ENCODE measurements at regions of chr1 and their contacts with region 1.

Region 1: DNA sequence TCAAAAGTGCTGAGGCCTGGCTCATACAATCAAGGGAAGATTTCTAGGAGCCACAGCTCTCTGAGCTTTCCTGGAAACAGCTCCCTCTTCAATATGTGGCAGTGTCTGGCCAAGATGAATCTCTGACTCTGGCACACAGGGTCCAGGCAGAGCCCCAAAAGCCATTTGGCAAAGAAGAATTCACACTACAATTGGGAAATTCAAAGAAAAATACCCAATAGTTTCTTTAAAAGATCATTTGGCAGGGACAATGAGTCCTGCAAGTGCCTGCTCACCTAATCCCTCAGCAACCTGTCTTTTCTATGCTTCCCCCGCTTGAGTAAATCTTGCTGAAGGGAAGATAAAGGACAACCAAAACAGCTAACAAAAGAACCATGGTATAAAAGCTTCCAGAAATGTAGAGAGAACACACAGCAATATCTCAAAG is 124.6 kb downstream of the TGFBR3 start:
- DNase-seq: peak in 2 of 4 experiments; percentile 32 to 51
- ATAC-seq: no peak; the same call in 2 of the 3 replicates
- H3K4me3 ChIP-seq: no peak overlapping the region
- H3K27ac ChIP-seq: no peak overlapping the region
- H3K4me1 ChIP-seq: peaks cover 9 to 62% of the 10 kb centered on the region in 2 experiments
- H3K27me3 ChIP-seq: no peaks in the 10 kb centered on the region
- CTCF ChIP-seq: no peak
- EP300 ChIP-seq: peak; percentile 32; the same call in 1 of the 2 replicates
- POLR2A ChIP-seq: no peak
- RAD21 ChIP-seq: no peak

Region 2: GRCh38 chr1:90246069-90246468 is 1515.2 kb before region 1 on chr1:
- CTCF ChIA-PET with region 1: no interaction called
- POLR2A ChIA-PET with region 1: no interaction called
- in situ Hi-C with region 1: no loop called
- intact Hi-C with region 1: no loop called
- DNase-seq: no peak
- ATAC-seq: no peak
- H3K4me3 ChIP-seq: no peak overlapping the region
- H3K27ac ChIP-seq: no peak overlapping the region
- H3K4me1 ChIP-seq: no peaks in the 10 kb centered on the region
- H3K27me3 ChIP-seq: no peaks in the 10 kb centered on the region
- CTCF ChIP-seq: no peak
- EP300 ChIP-seq: no peak
- POLR2A ChIP-seq: no peak
- RAD21 ChIP-seq: no peak

Region 3: DNA sequence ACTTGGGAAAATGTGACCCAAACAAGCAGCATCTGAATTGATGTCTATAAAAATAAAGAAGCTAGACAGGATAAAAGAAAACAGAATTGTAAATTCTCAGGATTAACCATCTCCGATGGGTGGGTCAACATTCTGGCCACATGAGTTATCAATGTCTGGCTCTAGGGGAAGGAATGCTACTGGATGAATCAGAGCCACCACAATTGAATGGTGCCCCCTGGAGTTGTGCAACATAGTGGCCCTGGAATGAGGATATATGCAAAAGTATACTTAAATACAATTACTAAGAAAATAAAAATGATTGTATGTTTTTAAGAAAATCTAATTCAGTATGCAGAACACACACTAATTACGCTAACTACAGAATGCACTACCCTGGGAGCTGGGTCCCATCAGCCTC is 61.0 kb before region 1 on chr1:
- CTCF ChIA-PET with region 1: no interaction called
- POLR2A ChIA-PET with region 1: no interaction called
- in situ Hi-C with region 1: no loop called
- intact Hi-C with region 1: no loop called
- DNase-seq: no peak
- ATAC-seq: no peak
- H3K4me3 ChIP-seq: no peak overlapping the region
- H3K27ac ChIP-seq: no peak overlapping the region
- H3K4me1 ChIP-seq: peaks cover 8 to 16% of the 10 kb centered on the region in 2 experiments; a peak in 4 of 5 replicates
- H3K27me3 ChIP-seq: no peaks in the 10 kb centered on the region
- CTCF ChIP-seq: peak in 1 of 3 experiments; percentile 25; a peak in 1 of 6 replicates
- EP300 ChIP-seq: no peak
- POLR2A ChIP-seq: no peak
- RAD21 ChIP-seq: no peak

Region 4: DNA sequence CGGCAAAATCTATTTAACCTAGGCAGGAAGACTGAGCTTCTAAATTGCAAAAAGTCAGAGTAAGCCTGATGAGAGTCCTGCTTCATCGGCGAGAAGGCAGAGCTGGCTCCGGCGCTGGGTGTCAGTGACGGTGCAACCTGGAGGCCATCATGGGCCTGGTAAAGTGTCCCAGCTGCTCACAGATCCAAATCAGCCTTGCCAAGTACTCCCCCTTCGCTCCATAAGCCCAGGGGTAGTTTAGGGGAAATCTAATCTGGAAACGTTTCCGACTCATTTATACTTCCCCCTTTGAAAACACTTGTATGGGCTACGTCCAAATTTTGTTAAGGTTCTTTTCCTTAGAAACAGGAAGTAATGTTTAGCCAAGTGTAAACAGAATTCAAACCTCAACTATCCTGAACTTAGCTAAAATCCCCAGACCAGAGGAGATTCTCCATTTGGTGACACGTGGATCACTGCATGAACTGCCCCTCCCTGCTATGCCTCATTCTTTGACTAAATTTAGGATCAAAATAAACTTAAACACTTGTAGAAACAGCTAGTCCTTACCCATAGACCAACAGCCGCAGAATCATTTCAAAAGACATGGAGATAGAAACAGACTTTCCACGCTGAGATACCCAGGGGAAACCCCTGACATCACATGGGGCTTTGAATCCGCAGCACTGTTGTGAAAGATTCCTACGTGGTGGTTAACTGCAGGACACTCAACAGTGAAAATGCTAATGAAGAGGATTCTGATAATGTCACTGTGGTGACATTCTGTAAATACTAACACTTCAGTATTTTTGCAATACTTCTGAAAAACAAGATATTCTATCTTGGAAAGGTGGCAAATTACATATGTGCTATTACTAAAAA is 48.1 kb before region 1 on chr1:
- CTCF ChIA-PET with region 1: no interaction called
- POLR2A ChIA-PET with region 1: no interaction called
- in situ Hi-C with region 1: no loop called
- intact Hi-C with region 1: loop called (anchors 5 kb)
- DNase-seq: peak in 1 of 4 experiments; percentile 63
- ATAC-seq: peak; percentile 67
- H3K4me3 ChIP-seq: no peak overlapping the region
- H3K27ac ChIP-seq: peak overlapping the region; percentile 81
- H3K4me1 ChIP-seq: peaks cover 7 to 68% of the 10 kb centered on the region in 2 experiments; a peak in 4 of 5 replicates
- H3K27me3 ChIP-seq: no peaks in the 10 kb centered on the region; a peak in 1 of 5 replicates
- CTCF ChIP-seq: no peak
- EP300 ChIP-seq: peak; percentile 30; the same call in 1 of the 2 replicates
- POLR2A ChIP-seq: 0 out of 2 replicates have a peak, but pooled peaks have one; percentile 26
- RAD21 ChIP-seq: no peak; a peak in 1 of 4 replicates

Region 5: GRCh38 chr1:91751275-91751674 is 10.0 kb before region 1 on chr1:
- CTCF ChIA-PET with region 1: no interaction called
- POLR2A ChIA-PET with region 1: interaction called, 11 read pairs
- in situ Hi-C with region 1: no loop called
- intact Hi-C with region 1: no loop called
- DNase-seq: no peak
- ATAC-seq: no peak
- H3K4me3 ChIP-seq: no peak overlapping the region
- H3K27ac ChIP-seq: no peak overlapping the region
- H3K4me1 ChIP-seq: no peaks in the 10 kb centered on the region
- H3K27me3 ChIP-seq: no peaks in the 10 kb centered on the region
- CTCF ChIP-seq: no peak
- EP300 ChIP-seq: no peak
- POLR2A ChIP-seq: no peak
- RAD21 ChIP-seq: no peak

Measured in K562 (cell line).